WTC11 (cell line): ENCODE measurements at regions of chr21 and their contacts with region 1.

Region 1: GRCh38 chr21:33924079-33924765 is 8.6 kb upstream of the ATP5PO start:
- DNase-seq: peak; percentile 94
- ATAC-seq: peak; percentile 97
- H3K4me3 Mint-ChIP-seq: no peak overlapping the region
- H3K27ac Mint-ChIP-seq: no peak overlapping the region
- H3K4me1 Mint-ChIP-seq: peaks cover 6% of the 10 kb centered on the region
- H3K27me3 Mint-ChIP-seq: peaks cover 10% of the 10 kb centered on the region
- CTCF ChIP-seq: peak; percentile 84

Region 2: GRCh38 chr21:33894736-33895288 is 29.4 kb before region 1 on chr21:
- CTCF ChIA-PET with region 1: interaction called, 15 read pairs
- POLR2A ChIA-PET with region 1: no interaction called
- DNase-seq: peak; percentile 84
- ATAC-seq: peak; percentile 88
- H3K4me3 Mint-ChIP-seq: peak overlapping the region; percentile 51
- H3K27ac Mint-ChIP-seq: peak overlapping the region; percentile 34; the same call in 1 of the 2 replicates
- H3K4me1 Mint-ChIP-seq: peaks cover 21% of the 10 kb centered on the region
- H3K27me3 Mint-ChIP-seq: 0 out of 2 replicates have a peak, but pooled peaks cover 6% of the 10 kb centered on the region
- CTCF ChIP-seq: no peak; the same call in 1 of the 2 replicates

Region 3: DNA sequence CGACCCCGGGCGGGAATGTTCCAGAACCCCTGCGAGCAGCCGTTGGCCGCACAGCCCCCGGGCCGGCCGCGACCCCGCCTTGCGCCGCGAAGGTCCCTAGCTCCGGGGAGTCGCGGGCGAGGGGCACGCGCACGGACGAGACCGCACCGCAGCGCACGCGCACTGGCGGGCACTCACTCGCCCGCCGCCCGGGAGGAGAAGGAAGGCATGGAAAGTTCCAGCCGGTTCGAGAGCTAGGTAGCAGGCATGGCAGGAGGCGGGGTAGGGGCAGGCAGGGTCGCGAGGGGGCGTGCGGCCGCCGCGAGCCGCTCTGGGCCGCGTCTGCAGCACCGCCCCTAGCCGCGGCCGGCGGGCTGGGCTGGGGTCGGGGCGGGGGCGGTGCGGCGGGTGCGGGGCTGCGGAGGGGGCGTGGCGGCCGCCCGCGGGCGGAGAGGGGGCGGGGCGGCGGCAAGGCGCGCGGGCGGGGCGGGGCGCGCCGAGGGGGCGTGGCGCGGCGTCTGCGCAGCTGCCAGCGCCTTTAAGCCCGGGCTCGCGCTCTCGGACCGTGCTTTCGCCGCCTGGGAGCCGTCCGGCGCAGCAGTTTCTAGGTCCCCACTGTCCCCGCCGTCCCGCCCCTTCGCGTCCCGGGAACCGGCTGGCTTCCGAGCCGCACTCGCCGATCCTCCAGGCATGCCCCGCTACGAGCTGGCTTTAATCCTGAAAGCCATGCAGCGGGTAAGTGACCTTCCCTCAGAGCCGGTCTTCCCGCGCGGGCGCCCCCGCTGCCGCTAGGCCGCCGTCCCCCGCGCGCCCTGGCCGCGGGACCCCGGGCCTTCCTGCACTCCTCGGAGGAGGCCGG is 149.0 kb after region 1 on chr21 and contains the starts of genes MRPS6 and SLC5A3:
- CTCF ChIA-PET with region 1: interaction called, 27 read pairs
- POLR2A ChIA-PET with region 1: interaction called, 3 read pairs
- DNase-seq: peak; percentile 88
- ATAC-seq: peak; percentile 95
- H3K4me3 Mint-ChIP-seq: peak within 1 kb of the TSS; percentile 96
- H3K27ac Mint-ChIP-seq: peak within 1 kb of the TSS; percentile 92
- H3K4me1 Mint-ChIP-seq: peaks cover 39% of the 10 kb centered on the region
- H3K27me3 Mint-ChIP-seq: peaks cover 11% of the 10 kb centered on the region
- CTCF ChIP-seq: no peak; the same call in 1 of the 2 replicates
- total RNA-seq, gene MRPS6: 109 to 133 TPM (median 111 TPM) in 3 replicates
- total RNA-seq, gene SLC5A3: 14.8 to 18.0 TPM (median 17.8 TPM) in 3 replicates

Region 4: DNA sequence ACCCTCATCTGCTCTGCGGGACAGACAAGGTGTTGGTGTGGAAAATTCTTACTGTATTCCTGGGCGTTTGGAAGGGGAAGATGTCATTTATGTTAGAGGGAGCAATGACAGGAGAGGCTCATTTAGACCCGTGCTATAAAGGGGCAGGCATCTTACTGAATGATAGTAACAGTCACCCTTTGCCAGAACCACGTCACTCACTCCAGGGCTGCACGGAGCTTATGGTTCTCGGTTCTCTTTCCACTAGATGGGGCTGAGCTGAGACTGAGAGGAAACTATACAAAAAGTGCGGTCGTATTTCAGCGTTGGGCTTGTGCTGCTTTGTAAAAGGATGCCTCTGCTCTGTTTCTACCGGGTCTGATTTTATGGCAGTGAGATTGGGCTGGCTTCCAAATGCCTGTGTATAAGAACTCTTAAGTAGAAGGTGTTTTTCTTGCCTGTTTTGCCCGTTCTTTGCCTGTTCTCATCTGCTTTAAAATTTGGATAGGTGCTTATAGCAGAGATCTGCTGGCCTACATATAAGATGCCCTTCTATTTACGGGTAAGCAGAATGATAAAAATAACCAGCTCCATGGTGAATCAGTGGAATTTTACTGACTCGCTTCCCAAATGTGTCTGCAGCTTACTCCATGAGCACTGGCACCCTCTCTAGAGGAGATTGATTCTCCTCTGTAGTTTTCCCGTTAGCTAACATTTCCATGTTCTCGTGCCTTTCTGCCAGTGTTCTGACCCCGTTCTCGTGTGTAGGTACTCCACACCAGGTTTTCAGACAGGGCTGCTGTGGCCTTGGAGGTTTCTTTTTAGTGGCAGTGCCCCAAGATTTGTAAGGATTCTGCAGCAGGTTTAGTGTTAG is 205.0 kb after region 1 on chr21:
- CTCF ChIA-PET with region 1: interaction called, 12 read pairs
- POLR2A ChIA-PET with region 1: no interaction called
- DNase-seq: no peak
- ATAC-seq: peak; percentile 77
- H3K4me3 Mint-ChIP-seq: peak overlapping the region; percentile 37
- H3K27ac Mint-ChIP-seq: peak overlapping the region; percentile 60
- H3K4me1 Mint-ChIP-seq: peaks cover 81% of the 10 kb centered on the region
- H3K27me3 Mint-ChIP-seq: no peaks in the 10 kb centered on the region
- CTCF ChIP-seq: no peak

Region 5: GRCh38 chr21:34243562-34243961 is 319.3 kb after region 1 on chr21:
- CTCF ChIA-PET with region 1: interaction called, 12 read pairs
- POLR2A ChIA-PET with region 1: interaction called, 5 read pairs
- DNase-seq: peak; percentile 50
- ATAC-seq: peak; percentile 82
- H3K4me3 Mint-ChIP-seq: no peak overlapping the region
- H3K27ac Mint-ChIP-seq: no peak overlapping the region
- H3K4me1 Mint-ChIP-seq: peaks cover 2% of the 10 kb centered on the region; the same call in 1 of the 2 replicates
- H3K27me3 Mint-ChIP-seq: no peaks in the 10 kb centered on the region; the same call in 1 of the 2 replicates
- CTCF ChIP-seq: 0 out of 2 replicates have a peak, but pooled peaks have one; percentile 38